ENCODE measurements at regions of chr1 and their contacts with region 1.

Region 1: GRCh38 chr1:85464497-85465098 is 361 bp downstream of the DDAH1 start:
- DNase-seq: peak; percentile 40
- ATAC-seq: peak; percentile 74
- H3K4me3 ChIP-seq: peak overlapping the region; percentile 89 to 93 (median 93)
- H3K27ac ChIP-seq: peak overlapping the region; percentile 83
- H3K4me1 ChIP-seq: peaks cover 49% of the 10 kb centered on the region
- H3K27me3 ChIP-seq: no peaks in the 10 kb centered on the region; a peak in 2 of 5 replicates
- CTCF ChIP-seq: no peak
- EP300 ChIP-seq: no peak
- POLR2A ChIP-seq: peak; percentile 61 to 78; a peak in 3 of 4 replicates
- RAD21 ChIP-seq: no peak

Region 2: GRCh38 chr1:85328713-85329376 is 135.8 kb before region 1 on chr1:
- CTCF ChIA-PET with region 1: no interaction called
- POLR2A ChIA-PET with region 1: interaction called, 4 read pairs
- in situ Hi-C with region 1: loop called (anchors 10 kb)
- intact Hi-C with region 1: loop called (anchors 5 kb)
- DNase-seq: peak; percentile 97
- ATAC-seq: peak; percentile 97
- H3K4me3 ChIP-seq: no peak overlapping the region
- H3K27ac ChIP-seq: peak overlapping the region; percentile 83
- H3K4me1 ChIP-seq: peaks cover 62% of the 10 kb centered on the region
- H3K27me3 ChIP-seq: no peaks in the 10 kb centered on the region
- CTCF ChIP-seq: no peak
- EP300 ChIP-seq: peak; percentile 27 to 95; a peak in 2 of 4 replicates
- POLR2A ChIP-seq: no peak
- RAD21 ChIP-seq: no peak

Region 3: DNA sequence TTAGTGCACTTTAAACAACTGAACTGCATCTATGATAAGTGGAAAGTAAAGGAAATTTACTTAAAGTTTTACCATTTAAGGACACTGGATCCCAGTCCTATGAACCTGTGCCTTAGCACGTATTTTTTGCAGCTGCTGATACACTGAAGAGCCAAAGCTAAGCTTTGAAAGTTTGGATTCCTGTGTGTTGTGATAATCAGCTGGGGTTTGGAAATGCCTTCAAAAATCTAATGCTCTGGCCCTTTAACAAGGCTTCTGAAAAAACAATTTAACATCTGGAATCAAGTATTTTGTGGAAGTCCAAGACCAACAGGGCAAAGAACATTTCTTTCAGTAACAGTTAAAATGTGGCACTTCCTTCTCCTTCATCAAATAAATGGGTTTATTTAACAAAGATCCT is 51.4 kb before region 1 on chr1:
- CTCF ChIA-PET with region 1: no interaction called
- POLR2A ChIA-PET with region 1: interaction called, 3 read pairs
- in situ Hi-C with region 1: no loop called
- intact Hi-C with region 1: loop called (anchors 10 kb)
- DNase-seq: no peak
- ATAC-seq: no peak
- H3K4me3 ChIP-seq: no peak overlapping the region
- H3K27ac ChIP-seq: no peak overlapping the region
- H3K4me1 ChIP-seq: peaks cover 7% of the 10 kb centered on the region
- H3K27me3 ChIP-seq: no peaks in the 10 kb centered on the region
- CTCF ChIP-seq: no peak
- EP300 ChIP-seq: no peak
- POLR2A ChIP-seq: no peak
- RAD21 ChIP-seq: no peak